IMR-90 (cell line): ENCODE measurements at regions of chr15 and their contacts with region 1.

Region 1: GRCh38 chr15:81000624-81001151 is at the start of gene TLNRD1:
- DNase-seq: peak; percentile 92
- ATAC-seq: peak; percentile 84
- H3K4me3 ChIP-seq: peak within 1 kb of the TSS; percentile 89
- H3K27ac ChIP-seq: peak within 1 kb of the TSS; percentile 86
- H3K4me1 ChIP-seq: peaks cover 13% of the 10 kb centered on the region
- H3K27me3 ChIP-seq: no peaks in the 10 kb centered on the region
- CTCF ChIP-seq: no peak
- POLR2A ChIP-seq: peak; percentile 91
- RAD21 ChIP-seq: no peak
- total RNA-seq, gene TLNRD1: 2.2 and 2.8 TPM in 2 replicates

Region 2: DNA sequence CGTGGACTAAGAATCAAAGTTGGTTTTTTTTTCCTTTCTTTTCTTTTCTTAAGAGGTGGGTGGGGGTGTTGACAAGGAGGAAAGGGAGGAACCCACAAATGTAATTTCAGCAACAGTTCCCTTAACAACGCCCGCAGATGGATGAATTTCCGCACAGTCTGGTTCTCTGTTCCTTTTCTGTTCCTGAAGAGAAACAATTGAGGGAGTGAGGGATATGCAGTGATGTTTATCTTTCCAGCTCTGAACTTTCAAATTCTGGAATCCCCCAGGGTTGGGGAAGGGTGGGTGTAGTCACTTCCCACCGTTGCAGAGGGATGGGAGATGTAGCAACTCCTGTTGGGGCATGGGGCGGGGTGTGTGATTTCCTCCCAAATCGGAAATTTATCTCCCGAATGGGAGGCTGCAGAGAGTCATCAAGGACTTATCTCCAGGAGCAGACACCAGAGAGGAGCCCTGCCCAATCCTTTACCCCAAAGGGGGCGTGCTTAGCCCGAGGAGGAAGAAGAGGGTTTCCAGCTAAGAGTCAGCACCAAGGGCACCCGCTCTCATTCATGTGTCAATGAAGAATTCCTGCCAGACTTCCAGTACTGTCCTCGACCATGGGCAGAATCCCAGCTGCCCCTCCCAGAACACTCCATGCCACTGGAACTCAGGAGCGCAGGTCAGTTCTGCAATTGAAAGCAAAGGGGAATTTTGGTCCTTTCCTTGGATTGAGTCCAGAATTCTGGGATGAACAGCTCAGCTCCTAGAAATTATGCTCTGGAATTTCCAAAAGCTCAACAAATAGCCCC is 98.4 kb after region 1 on chr15:
- CTCF ChIA-PET with region 1: no interaction called
- POLR2A ChIA-PET with region 1: no interaction called
- dilution Hi-C with region 1: no loop called
- in situ Hi-C with region 1: no loop called
- intact Hi-C with region 1: loop called (anchors 5 kb)
- DNase-seq: peak; percentile 36
- ATAC-seq: peak; percentile 21; the same call in 1 of the 2 replicates
- H3K4me3 ChIP-seq: no peak overlapping the region
- H3K27ac ChIP-seq: no peak overlapping the region
- H3K4me1 ChIP-seq: no peaks in the 10 kb centered on the region
- H3K27me3 ChIP-seq: no peaks in the 10 kb centered on the region
- CTCF ChIP-seq: no peak
- POLR2A ChIP-seq: no peak
- RAD21 ChIP-seq: no peak